ENCODE measurements at regions of chr22 and their contacts with region 1.

Region 1: GRCh38 chr22:39520054-39520891 is at the start of gene ATF4:
- DNase-seq: peak; percentile 97
- ATAC-seq: peak; percentile 89
- H3K4me3 Mint-ChIP-seq: peak within 1 kb of the TSS; percentile 95
- H3K27ac Mint-ChIP-seq: peak within 1 kb of the TSS; percentile 100
- H3K4me1 Mint-ChIP-seq: peaks cover 38% of the 10 kb centered on the region
- H3K27me3 Mint-ChIP-seq: peaks cover 31% of the 10 kb centered on the region
- CTCF ChIP-seq: no peak
- total RNA-seq, gene ATF4: 361 to 460 TPM (median 371 TPM) in 3 replicates

Region 2: GRCh38 chr22:39319270-39320022 is 200.8 kb before region 1 on chr22 and contains the start of gene RPL3:
- CTCF ChIA-PET with region 1: interaction called, 5 read pairs
- POLR2A ChIA-PET with region 1: interaction called, 13 read pairs
- DNase-seq: peak; percentile 93
- ATAC-seq: peak; percentile 64
- H3K4me3 Mint-ChIP-seq: peak within 1 kb of the TSS; percentile 99
- H3K27ac Mint-ChIP-seq: peak within 1 kb of the TSS; percentile 100
- H3K4me1 Mint-ChIP-seq: peaks cover 44% of the 10 kb centered on the region
- H3K27me3 Mint-ChIP-seq: peaks cover 4% of the 10 kb centered on the region; the same call in 1 of the 2 replicates
- CTCF ChIP-seq: no peak
- total RNA-seq, gene RPL3: 3,009 to 3,279 TPM (median 3,249 TPM) in 3 replicates

Region 3: DNA sequence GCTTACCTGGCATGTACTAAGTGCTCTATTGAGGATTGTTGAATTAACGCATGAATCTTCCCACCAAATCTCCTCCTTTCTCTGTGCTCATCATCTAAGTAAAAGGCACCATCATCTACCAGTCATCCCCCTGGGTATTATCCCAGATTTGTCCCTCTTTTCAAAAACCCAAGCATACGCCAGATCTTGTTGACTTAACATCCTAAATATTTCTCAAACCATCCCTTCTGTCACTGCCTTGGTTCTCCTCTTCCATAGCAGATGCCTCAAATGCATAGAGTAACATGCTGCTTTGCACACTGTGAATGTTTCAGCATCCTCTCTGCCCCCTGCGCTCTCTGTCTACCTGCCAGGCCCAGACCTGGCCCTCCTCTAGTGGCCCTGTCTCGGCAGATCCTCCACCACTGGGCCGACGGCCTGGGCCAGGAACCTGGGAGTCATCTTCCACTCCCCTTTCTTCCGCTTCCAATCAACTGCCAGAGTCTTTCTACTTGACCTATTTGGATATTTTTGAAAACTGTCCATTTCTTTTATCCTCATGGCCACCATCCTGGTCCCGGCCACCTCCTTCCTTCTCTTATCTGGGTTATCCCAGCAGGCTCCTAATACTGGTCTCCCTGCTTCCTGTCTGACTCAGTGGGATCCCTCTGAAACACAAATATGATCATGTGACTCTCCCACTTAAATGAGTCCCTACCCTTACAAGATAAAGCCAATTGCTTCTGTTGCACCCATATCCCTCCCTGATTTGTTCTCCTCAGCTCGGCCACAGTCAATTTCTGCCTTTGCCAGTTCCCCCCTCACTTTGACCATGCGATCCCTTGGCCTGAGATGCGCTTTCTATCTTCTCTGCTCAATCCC is 124.1 kb before region 1 on chr22:
- CTCF ChIA-PET with region 1: interaction called, 11 read pairs
- POLR2A ChIA-PET with region 1: interaction called, 4 read pairs
- DNase-seq: no peak
- ATAC-seq: no peak
- H3K4me3 Mint-ChIP-seq: no peak overlapping the region
- H3K27ac Mint-ChIP-seq: no peak overlapping the region
- H3K4me1 Mint-ChIP-seq: peaks cover 7% of the 10 kb centered on the region
- H3K27me3 Mint-ChIP-seq: peaks cover 2% of the 10 kb centered on the region; the same call in 1 of the 2 replicates
- CTCF ChIP-seq: no peak

Region 4: GRCh38 chr22:39502109-39502788 is 18.0 kb before region 1 on chr22 and contains the start of gene MIEF1:
- CTCF ChIA-PET with region 1: interaction called, 41 read pairs
- POLR2A ChIA-PET with region 1: interaction called, 16 read pairs
- DNase-seq: peak; percentile 96
- ATAC-seq: peak; percentile 97
- H3K4me3 Mint-ChIP-seq: peak within 1 kb of the TSS; percentile 97
- H3K27ac Mint-ChIP-seq: peak within 1 kb of the TSS; percentile 97
- H3K4me1 Mint-ChIP-seq: peaks cover 13% of the 10 kb centered on the region
- H3K27me3 Mint-ChIP-seq: peaks cover 89% of the 10 kb centered on the region
- CTCF ChIP-seq: no peak
- total RNA-seq, gene MIEF1: 31.5 to 38.7 TPM (median 31.9 TPM) in 3 replicates

Region 5: DNA sequence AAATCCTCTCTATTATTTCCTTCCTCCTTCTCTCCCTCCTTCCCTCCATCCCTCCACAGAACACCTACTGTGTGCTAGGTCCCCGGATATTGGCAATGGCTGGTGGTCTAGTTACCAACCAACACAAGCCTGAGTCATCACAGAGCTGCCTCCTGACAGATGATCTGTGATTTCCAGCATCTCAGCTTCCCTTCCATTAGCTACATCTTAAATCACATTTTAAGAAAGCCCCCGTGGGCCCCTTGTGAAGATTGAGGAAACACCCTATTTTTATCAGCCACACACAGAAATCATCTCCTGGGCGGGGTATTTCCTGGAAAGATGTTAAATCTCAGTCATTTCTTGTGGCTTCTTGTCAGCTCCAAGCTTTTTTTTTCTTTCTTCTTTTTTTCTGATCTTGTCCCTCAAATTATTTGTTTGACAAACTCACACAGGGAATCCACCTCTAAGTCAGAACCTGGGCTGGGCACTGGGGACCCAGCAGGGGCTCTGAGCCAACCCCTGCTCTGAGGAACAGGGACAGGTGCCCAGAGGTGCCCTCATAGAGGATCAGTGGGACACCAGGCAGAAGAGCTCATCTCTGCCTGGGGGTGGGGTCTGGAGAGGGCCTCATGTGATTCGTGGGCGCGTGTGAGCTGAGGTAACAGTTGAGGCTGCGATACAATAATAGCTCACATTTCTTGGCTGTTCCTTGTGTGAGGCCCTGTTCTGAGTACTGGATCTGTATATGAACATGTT is 92.7 kb after region 1 on chr22:
- CTCF ChIA-PET with region 1: no interaction called
- POLR2A ChIA-PET with region 1: no interaction called
- DNase-seq: no peak
- ATAC-seq: no peak
- H3K4me3 Mint-ChIP-seq: no peak overlapping the region
- H3K27ac Mint-ChIP-seq: no peak overlapping the region
- H3K4me1 Mint-ChIP-seq: peaks cover 9% of the 10 kb centered on the region
- H3K27me3 Mint-ChIP-seq: peaks cover 4% of the 10 kb centered on the region
- CTCF ChIP-seq: no peak